ENCODE measurements at regions of chr6 and their contacts with region 1.

Region 1: GRCh38 chr6:44010411-44011349 is 116.6 kb downstream of the MRPL14 start:
- DNase-seq: peak; percentile 96
- H3K4me3 ChIP-seq: peak overlapping the region; percentile 18; the same call in 1 of the 2 replicates
- H3K27ac ChIP-seq: peak overlapping the region; percentile 93
- H3K27me3 ChIP-seq: no peaks in the 10 kb centered on the region
- CTCF ChIP-seq: 0 out of 2 replicates have a peak, but pooled peaks have one; percentile 6

Region 2: GRCh38 chr6:44058617-44059358 is 48.1 kb after region 1 on chr6:
- CTCF ChIA-PET with region 1: no interaction called
- POLR2A ChIA-PET with region 1: interaction called, 10 read pairs
- DNase-seq: peak; percentile 97
- H3K4me3 ChIP-seq: no peak overlapping the region
- H3K27ac ChIP-seq: peak overlapping the region; percentile 98
- H3K27me3 ChIP-seq: no peaks in the 10 kb centered on the region
- CTCF ChIP-seq: no peak

Region 3: DNA sequence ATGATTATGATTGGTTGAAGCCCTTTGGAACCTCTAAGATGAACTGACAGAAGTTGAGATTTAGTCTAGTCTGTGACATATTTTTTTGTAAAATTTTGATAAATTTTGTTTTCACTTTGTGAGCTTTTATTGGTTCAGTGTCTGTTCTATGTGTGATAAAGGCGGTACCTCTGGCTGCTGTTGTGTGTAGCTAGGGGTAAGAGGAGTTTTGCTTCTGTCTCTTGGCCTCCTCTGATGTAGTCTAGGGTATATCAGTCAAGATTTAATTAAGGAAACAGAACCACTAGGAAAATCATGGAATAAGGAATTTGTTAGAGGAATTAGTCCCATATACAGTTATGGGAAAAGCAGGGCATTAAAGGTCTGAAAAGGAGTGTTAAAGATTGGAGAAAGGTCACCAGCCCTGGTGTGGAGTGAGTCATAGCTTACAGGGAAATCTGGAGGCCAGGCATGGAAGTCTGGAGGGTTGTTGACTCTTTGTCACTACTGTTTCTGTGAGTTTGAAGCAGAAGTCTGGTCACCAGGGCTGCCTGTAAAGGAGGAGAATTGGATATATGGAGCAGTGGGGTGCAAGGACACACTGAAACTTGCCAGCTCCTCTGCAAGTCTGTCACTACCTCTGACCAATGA is 405.3 kb after region 1 on chr6:
- CTCF ChIA-PET with region 1: no interaction called
- POLR2A ChIA-PET with region 1: no interaction called
- DNase-seq: peak; percentile 2
- H3K4me3 ChIP-seq: no peak overlapping the region
- H3K27ac ChIP-seq: peak overlapping the region; percentile 34
- H3K27me3 ChIP-seq: no peaks in the 10 kb centered on the region
- CTCF ChIP-seq: no peak

Measured in AG04450 (cell line).